AG04450 (cell line): ENCODE measurements at regions of chr1 and their contacts with region 1.

Region 1: GRCh38 chr1:77533660-77534305 is 148.7 kb downstream of the ZZZ3 start:
- DNase-seq: no peak
- H3K4me3 ChIP-seq: no peak overlapping the region
- H3K27ac ChIP-seq: no peak overlapping the region
- H3K27me3 ChIP-seq: no peaks in the 10 kb centered on the region
- CTCF ChIP-seq: peak; percentile 81

Region 2: DNA sequence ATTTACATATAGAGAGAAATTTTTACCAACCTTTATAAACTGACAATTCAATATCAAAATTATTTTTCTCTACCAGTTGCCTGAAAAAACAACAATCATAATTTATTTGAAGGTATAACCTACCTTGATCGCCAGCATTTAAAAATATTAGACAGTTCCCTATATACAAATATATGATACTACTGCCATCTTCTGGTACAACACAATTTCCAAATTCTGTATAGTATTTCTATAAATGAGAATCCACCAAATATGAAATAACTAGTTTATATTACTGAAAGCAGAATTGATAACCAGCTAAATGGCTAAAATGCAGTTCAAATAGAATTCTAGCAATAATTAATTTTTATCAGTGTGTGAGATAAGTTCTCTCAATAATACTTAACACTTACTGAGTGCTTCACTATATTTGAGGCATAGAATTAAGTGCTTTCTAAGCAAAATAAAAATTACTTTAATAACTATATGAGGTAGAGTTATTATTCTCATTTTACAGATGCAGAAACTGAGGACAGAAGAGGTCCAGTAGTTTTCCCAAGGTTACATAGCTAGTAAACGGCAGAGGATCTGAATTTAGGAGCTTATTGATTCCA is 390.2 kb before region 1 on chr1:
- CTCF ChIA-PET with region 1: interaction called, 27 read pairs
- POLR2A ChIA-PET with region 1: no interaction called
- DNase-seq: no peak
- H3K4me3 ChIP-seq: no peak overlapping the region
- H3K27ac ChIP-seq: no peak overlapping the region
- H3K27me3 ChIP-seq: no peaks in the 10 kb centered on the region
- CTCF ChIP-seq: peak; percentile 35

Region 3: GRCh38 chr1:77290576-77290975 is 243.2 kb before region 1 on chr1:
- CTCF ChIA-PET with region 1: no interaction called
- POLR2A ChIA-PET with region 1: no interaction called
- DNase-seq: no peak
- H3K4me3 ChIP-seq: no peak overlapping the region
- H3K27ac ChIP-seq: no peak overlapping the region
- H3K27me3 ChIP-seq: no peaks in the 10 kb centered on the region
- CTCF ChIP-seq: no peak

Region 4: DNA sequence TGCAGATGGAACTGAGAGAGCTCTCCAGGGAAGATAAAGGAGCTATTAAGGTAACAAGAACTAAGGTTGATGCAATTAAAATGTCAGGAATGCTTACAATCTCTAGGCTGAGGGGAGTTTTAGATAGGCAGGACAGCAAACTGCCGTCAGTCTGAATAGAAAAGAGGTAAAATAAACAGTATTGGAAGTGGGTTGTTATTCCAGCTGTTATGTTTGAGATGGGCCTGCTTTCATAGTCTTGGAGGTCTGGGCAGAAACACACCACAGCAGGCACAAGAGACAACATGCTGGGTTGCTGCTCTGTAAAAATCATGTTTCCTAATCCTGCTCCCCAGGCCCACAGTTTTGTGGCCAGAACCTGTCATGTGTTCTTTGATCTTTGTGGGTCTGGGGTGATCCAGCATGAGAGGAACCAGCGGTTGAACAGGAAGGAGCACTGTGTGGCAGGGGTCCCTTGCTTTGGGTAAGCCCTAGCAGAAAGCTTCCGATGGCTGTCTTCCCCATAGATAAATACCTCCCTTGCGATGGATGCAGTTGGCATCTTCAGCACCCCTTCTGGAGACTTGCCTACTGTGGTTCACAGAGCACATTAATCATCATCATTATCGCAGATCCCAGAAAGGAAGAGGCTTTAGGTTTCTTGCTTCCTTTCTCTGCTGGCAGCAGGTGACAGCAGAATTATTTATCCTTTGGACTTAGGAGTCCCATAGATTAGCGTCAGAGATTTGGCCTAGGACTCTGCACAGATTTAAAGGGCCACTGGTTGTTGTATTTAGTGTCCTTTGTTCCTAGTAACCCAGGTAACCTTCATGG is 154.9 kb before region 1 on chr1:
- CTCF ChIA-PET with region 1: interaction called, 10 read pairs
- POLR2A ChIA-PET with region 1: no interaction called
- DNase-seq: peak; percentile 37
- H3K4me3 ChIP-seq: no peak overlapping the region
- H3K27ac ChIP-seq: peak overlapping the region; percentile 35
- H3K27me3 ChIP-seq: no peaks in the 10 kb centered on the region
- CTCF ChIP-seq: no peak

Region 5: DNA sequence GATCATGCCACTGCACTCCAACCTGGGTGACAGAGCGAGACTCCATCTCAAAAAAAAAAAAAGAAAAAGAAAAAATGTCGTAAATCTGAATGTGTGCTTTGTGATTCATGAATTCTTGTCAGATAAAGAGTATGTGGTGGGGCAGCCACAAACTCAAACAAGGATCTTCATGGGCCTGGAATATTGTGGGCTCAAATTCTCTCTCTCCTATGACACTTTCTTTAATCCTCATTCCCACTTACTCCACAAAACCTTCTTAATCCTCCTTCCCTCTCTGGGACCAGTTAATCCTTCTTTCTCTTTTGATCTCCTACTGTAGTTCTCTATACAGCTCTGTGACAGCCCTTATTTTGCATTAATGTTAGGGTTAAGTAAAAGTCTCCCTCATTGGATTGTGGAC is 139.6 kb before region 1 on chr1:
- CTCF ChIA-PET with region 1: no interaction called
- POLR2A ChIA-PET with region 1: no interaction called
- DNase-seq: no peak
- H3K4me3 ChIP-seq: no peak overlapping the region
- H3K27ac ChIP-seq: no peak overlapping the region
- H3K27me3 ChIP-seq: no peaks in the 10 kb centered on the region
- CTCF ChIP-seq: no peak

Region 6: DNA sequence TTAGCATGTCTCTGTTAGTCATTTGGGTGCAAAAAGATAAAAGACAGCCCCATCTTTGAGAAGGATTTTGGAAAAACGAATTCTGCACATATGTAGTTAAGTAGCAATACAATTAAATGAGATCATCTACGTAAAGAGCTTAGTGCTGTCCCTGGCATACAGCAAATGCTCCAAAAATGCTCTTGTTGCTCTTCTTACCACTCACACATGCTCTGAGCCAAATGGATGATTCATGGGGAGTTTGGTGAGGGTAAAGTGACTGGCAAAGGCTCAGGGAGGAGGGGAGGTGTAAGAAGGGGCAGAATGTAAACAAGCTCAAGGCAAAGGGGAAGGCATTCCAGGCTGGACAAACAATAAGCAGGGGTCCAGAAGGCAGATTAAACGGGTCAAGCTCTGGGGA is 60.1 kb before region 1 on chr1:
- CTCF ChIA-PET with region 1: interaction called, 10 read pairs
- POLR2A ChIA-PET with region 1: interaction called, 11 read pairs
- DNase-seq: peak; percentile 70
- H3K4me3 ChIP-seq: no peak overlapping the region
- H3K27ac ChIP-seq: peak overlapping the region; percentile 54
- H3K27me3 ChIP-seq: no peaks in the 10 kb centered on the region
- CTCF ChIP-seq: no peak

Region 7: DNA sequence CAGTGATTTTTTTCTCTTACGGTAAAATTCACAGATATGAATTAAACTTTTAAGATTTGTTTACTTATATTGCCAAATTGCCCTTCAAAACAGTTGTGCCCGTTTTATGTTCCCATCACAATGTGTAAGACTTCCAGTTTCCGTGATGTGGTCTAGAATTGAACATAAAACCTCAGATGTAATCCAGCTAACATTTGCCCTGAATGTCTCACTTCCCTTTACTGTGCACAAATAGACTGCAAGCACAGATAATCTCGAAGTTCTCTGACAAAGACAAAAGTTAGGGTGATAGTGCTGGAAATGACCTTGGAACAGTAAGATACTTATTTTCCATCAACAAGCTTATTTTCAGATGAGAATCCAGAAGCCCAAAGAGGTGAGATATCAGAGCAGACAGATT is 28.8 kb before region 1 on chr1:
- CTCF ChIA-PET with region 1: interaction called, 11 read pairs
- POLR2A ChIA-PET with region 1: no interaction called
- DNase-seq: no peak
- H3K4me3 ChIP-seq: no peak overlapping the region
- H3K27ac ChIP-seq: no peak overlapping the region
- H3K27me3 ChIP-seq: no peaks in the 10 kb centered on the region
- CTCF ChIP-seq: no peak

Region 8: DNA sequence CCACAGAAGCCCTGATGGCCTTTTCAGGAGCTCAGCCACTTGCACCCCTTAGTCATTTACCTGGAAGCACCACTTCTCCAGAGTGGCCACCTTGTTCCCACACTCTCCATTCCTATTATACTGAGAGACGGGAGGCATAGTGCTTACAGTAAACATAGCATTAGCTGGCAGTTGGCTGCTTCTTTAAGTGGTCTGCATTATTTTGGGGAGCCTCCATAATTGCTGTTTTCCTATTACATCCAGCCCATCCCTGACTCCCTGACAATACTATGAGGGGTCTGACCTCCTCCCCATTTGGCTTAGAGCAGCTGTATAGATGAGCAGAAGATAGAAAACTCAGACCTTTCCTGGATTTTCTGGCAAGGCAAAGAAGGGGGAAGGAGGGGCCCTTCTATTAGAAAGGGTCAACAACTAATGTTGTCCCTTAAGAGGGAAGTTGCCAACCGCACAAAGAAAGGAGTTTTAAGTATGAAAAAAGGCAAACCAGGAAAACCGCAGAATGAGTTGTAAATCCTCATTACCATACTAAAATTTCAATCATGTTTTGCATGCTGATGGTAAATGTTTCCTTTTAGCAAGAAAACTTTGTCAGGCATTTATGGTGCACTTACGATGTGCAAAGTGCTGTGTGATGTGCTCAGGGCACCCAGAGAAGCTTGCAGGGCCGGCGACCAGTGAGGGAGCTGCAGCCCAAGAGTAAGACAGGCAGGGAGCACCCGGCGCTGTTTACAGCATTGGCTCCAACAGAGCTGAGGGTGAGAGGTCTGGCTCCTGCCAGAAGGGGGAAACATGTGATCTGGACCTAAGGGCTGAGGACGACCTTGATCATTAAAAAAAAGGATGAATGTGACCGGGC is 18.6 kb before region 1 on chr1:
- CTCF ChIA-PET with region 1: interaction called, 24 read pairs
- POLR2A ChIA-PET with region 1: interaction called, 13 read pairs
- DNase-seq: no peak
- H3K4me3 ChIP-seq: no peak overlapping the region
- H3K27ac ChIP-seq: peak overlapping the region; percentile 98
- H3K27me3 ChIP-seq: no peaks in the 10 kb centered on the region
- CTCF ChIP-seq: peak; percentile 37

Region 9: GRCh38 chr1:77631751-77632150 is 98.0 kb after region 1 on chr1:
- CTCF ChIA-PET with region 1: no interaction called
- POLR2A ChIA-PET with region 1: no interaction called
- DNase-seq: no peak
- H3K4me3 ChIP-seq: no peak overlapping the region
- H3K27ac ChIP-seq: no peak overlapping the region
- H3K27me3 ChIP-seq: no peaks in the 10 kb centered on the region
- CTCF ChIP-seq: no peak

Region 10: DNA sequence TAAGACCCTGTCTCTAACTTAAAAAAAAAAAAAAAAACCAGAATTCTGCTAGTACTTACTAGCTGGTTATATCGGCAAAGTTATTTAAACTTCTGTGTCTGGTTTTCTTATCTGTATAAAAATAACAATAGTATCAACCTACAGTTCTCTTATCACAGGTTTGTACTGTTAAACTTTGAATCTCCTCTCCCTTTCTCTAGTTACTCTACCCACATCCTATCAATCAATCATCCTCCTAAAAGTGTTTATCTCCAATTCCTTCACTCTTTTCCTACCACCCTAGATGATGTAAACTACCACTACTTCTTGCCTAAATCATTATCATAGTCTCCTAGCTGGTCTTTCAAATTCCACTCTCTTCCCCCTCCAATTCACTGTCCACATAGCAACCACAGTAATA is 198.3 kb after region 1 on chr1:
- CTCF ChIA-PET with region 1: no interaction called
- POLR2A ChIA-PET with region 1: no interaction called
- DNase-seq: no peak
- H3K4me3 ChIP-seq: no peak overlapping the region
- H3K27ac ChIP-seq: no peak overlapping the region
- H3K27me3 ChIP-seq: no peaks in the 10 kb centered on the region
- CTCF ChIP-seq: no peak